ENCODE measurements at regions of chr1 and their contacts with region 1.

Region 1: GRCh38 chr1:34549199-34549598 is 205.6 kb upstream of the GJB5 start:
- DNase-seq: peak; percentile 13 to 65
- H3K4me3 ChIP-seq: no peak overlapping the region
- H3K27ac ChIP-seq: no peak overlapping the region
- H3K4me1 ChIP-seq: peaks cover 0 to 3% (median 0%) of the 10 kb centered on the region in 4 experiments; a peak in 2 of 7 replicates
- H3K27me3 ChIP-seq: no peaks in the 10 kb centered on the region
- CTCF ChIP-seq: peak; percentile 55 to 66 (median 58)
- EP300 ChIP-seq: no peak
- POLR2A ChIP-seq: no peak
- RAD21 ChIP-seq: peak; percentile 41 to 59

Region 2: DNA sequence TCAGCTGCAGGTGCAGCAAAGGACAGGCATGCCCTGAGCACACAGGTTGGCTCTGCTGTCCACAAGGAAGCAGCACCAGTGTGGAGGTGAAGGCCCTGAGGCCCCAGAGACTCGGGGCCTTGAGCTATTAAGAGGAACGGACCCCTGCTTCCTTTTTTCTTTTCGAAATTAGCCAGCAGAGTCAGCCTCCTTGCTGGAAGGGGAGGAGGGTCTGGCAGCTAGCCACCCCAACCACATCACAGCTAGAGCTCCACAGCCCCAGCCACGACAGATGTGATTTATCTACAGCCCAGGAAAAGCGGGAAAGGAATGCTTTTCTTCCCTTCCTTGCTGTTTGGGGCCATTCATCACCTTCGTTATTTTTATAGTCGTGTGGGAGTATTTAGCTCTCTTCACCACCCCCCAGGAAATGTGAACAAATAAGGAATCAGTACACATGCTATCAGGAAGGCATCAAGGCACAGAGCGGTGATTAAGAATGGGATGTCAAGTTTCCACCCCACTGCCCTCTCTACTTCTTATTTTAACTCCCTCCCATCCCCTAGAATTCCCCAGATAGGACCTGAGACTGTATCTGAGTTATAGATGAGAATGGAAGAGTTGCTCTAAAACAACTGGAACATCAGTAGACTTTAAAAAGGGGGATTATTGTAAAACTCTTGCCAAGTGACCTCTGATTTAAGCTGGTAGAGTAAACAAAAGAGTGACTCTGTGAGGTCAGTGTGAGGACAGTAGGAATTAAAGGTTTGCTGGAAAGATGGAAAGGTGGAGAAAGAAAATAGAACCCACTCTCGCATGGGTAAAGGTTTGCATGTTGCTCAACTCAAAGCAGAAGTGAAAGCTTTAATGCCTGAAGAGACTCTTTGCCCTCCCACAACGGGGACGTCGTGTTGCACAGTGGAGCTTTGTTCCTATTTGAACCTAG is 19.0 kb before region 1 on chr1:
- CTCF ChIA-PET with region 1: interaction called, 63 read pairs
- POLR2A ChIA-PET with region 1: no interaction called
- DNase-seq: no peak
- H3K4me3 ChIP-seq: no peak overlapping the region
- H3K27ac ChIP-seq: no peak overlapping the region
- H3K4me1 ChIP-seq: no peaks in the 10 kb centered on the region; a peak in 1 of 7 replicates
- H3K27me3 ChIP-seq: no peaks in the 10 kb centered on the region
- CTCF ChIP-seq: no peak
- EP300 ChIP-seq: no peak
- POLR2A ChIP-seq: no peak
- RAD21 ChIP-seq: no peak

Region 3: GRCh38 chr1:34538481-34538880 is 10.7 kb before region 1 on chr1:
- CTCF ChIA-PET with region 1: interaction called, 13 read pairs
- POLR2A ChIA-PET with region 1: no interaction called
- DNase-seq: no peak
- H3K4me3 ChIP-seq: no peak overlapping the region
- H3K27ac ChIP-seq: no peak overlapping the region
- H3K4me1 ChIP-seq: no peaks in the 10 kb centered on the region
- H3K27me3 ChIP-seq: no peaks in the 10 kb centered on the region
- CTCF ChIP-seq: no peak
- EP300 ChIP-seq: no peak
- POLR2A ChIP-seq: no peak
- RAD21 ChIP-seq: no peak

Region 4: GRCh38 chr1:34590211-34590623 is 41.0 kb after region 1 on chr1:
- CTCF ChIA-PET with region 1: interaction called, 53 read pairs
- POLR2A ChIA-PET with region 1: interaction called, 3 read pairs
- DNase-seq: peak; percentile 59 to 70
- H3K4me3 ChIP-seq: no peak overlapping the region
- H3K27ac ChIP-seq: no peak overlapping the region
- H3K4me1 ChIP-seq: peaks cover 3 to 9% (median 7%) of the 10 kb centered on the region in 4 experiments; a peak in 6 of 7 replicates
- H3K27me3 ChIP-seq: no peaks in the 10 kb centered on the region
- CTCF ChIP-seq: no peak
- EP300 ChIP-seq: no peak
- POLR2A ChIP-seq: no peak
- RAD21 ChIP-seq: no peak

Measured in H1 (cell line).